Heart right ventricle (tissue), 16 donors: ENCODE measurements at regions of chr1 and their contacts with region 1.

Region 1: GRCh38 chr1:204128964-204129896 is 22.6 kb downstream of the ETNK2 start:
- DNase-seq: peak; percentile 67 to 73
- ATAC-seq: peak; percentile 79 to 93 (median 84)
- H3K4me3 ChIP-seq: peak overlapping the region in 3 of 10 donors; percentile 10 to 18 (median 17)
- H3K27ac ChIP-seq: peak overlapping the region in 2 of 10 donors; percentile 14 to 71
- H3K4me1 ChIP-seq: peaks cover 8 to 53% (median 27%) of the 10 kb centered on the region in 9 donors
- H3K27me3 ChIP-seq: no peaks in the 10 kb centered on the region
- CTCF ChIP-seq: peak; percentile 81 to 97 (median 92)

Region 2: GRCh38 chr1:203861379-203862184 is 267.6 kb before region 1 on chr1 and contains the start of gene SNRPE:
- intact Hi-C with region 1: loop called in 3 of 10 experiments (anchors 1 to 2 kb)
- DNase-seq: peak; percentile 94 to 96
- ATAC-seq: peak; percentile 98 to 99 (median 99)
- H3K4me3 ChIP-seq: peak within 1 kb of the TSS; percentile 43 to 90 (median 82)
- H3K27ac ChIP-seq: peak within 1 kb of the TSS in 9 of 10 donors; percentile 49 to 85 (median 70)
- H3K4me1 ChIP-seq: peaks cover 8 to 27% (median 16%) of the 10 kb centered on the region in 9 donors
- H3K27me3 ChIP-seq: no peaks in the 10 kb centered on the region
- CTCF ChIP-seq: peak; percentile 83 to 98 (median 97)
- total RNA-seq, gene SNRPE: 41.6 to 70.6 (median 50.4) TPM

Region 3: GRCh38 chr1:203871107-203871875 is 257.9 kb before region 1 on chr1:
- intact Hi-C with region 1: loop called in 9 of 10 experiments (anchors 1 to 5 kb)
- DNase-seq: peak in 1 of 2 donors; percentile 63
- ATAC-seq: peak; percentile 56 to 93 (median 89)
- H3K4me3 ChIP-seq: no peak overlapping the region
- H3K27ac ChIP-seq: peak overlapping the region in 5 of 10 donors; percentile 23 to 72 (median 41)
- H3K4me1 ChIP-seq: peaks cover 0 to 19% (median 14%) of the 10 kb centered on the region in 9 donors
- H3K27me3 ChIP-seq: no peaks in the 10 kb centered on the region
- CTCF ChIP-seq: peak; percentile 68 to 93 (median 79)

Region 4: DNA sequence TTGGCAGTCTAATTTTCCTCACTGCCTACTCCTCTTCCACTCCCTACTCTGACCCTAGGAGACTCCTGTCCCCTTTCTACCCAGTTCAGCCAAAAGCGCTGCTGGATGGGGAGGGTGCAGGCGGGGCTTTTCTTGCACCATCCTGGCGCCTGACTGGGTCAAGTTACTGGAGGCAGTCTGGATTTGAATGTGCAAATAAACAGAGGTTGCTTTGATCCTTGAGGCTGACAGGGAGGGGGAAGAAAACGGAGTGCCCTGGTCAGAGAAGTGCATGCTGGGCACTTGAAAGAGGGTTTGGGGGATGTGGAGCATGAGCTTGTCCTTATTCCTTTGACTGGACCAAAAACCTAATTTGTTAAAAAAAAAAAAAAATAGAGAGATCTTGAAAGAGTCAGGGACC is 133.1 kb before region 1 on chr1:
- intact Hi-C with region 1: loop called in 1 of 10 experiments (anchors 5 kb)
- DNase-seq: no peak
- ATAC-seq: peak in 5 of 8 donors; percentile 18 to 62 (median 21)
- H3K4me3 ChIP-seq: no peak overlapping the region
- H3K27ac ChIP-seq: peak overlapping the region in 3 of 10 donors; percentile 56 to 63 (median 62)
- H3K4me1 ChIP-seq: peaks cover 0 to 34% (median 12%) of the 10 kb centered on the region in 9 donors
- H3K27me3 ChIP-seq: peaks cover 0 to 3% (median 0%) of the 10 kb centered on the region in 7 donors
- CTCF ChIP-seq: no peak

Region 5: DNA sequence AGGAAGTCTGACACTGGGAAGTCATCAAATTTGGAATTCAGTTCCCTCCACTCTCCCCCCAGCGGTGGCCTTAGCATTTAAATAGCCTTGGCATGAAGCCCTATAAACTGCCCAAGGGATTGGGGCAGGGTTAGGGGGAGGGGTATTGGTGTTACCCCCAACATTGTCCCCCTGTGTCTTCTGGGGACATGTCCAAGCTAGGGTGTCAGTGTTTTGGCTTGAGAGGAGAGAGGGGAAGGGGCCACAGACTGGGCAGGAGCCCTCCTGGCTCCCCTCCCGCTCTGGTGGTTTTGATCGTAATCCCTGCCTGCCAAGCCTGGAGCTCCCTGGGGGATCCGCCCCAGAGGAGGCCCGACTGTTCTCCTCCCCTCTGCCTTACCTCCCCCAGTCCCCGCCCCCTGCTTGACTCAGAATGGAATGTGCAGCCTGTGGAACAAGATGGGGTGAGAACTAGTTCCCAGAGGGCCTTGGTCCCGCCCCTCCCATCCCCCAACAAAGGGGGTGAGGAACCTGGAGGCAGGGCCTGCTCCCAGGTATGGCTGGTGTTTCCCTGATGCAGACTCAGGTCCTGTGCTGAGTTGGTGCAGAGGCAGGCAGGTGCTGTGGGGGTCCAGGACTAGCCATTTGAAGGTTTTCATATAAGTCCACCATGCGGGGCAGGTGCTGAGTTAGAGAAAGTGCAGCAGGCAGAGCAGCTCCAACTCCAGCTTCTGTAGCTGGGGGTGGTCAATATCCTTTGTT is 48.9 kb before region 1 on chr1:
- intact Hi-C with region 1: loop called in 8 of 10 experiments (anchors 2 to 10 kb)
- DNase-seq: peak; percentile 63 to 71
- ATAC-seq: peak in 7 of 8 donors; percentile 68 to 80 (median 78)
- H3K4me3 ChIP-seq: peak overlapping the region in 3 of 10 donors; percentile 12 to 17 (median 13)
- H3K27ac ChIP-seq: peak overlapping the region in 8 of 10 donors; percentile 36 to 74 (median 50)
- H3K4me1 ChIP-seq: peaks cover 15 to 99% (median 70%) of the 10 kb centered on the region in 9 donors
- H3K27me3 ChIP-seq: peaks cover 0 to 13% (median 0%) of the 10 kb centered on the region in 7 donors
- CTCF ChIP-seq: peak in 1 of 9 donors; percentile 12

Region 6: GRCh38 chr1:204782118-204782700 is 653.0 kb after region 1 on chr1:
- intact Hi-C with region 1: no loop called
- DNase-seq: no peak
- ATAC-seq: no peak
- H3K4me3 ChIP-seq: no peak overlapping the region
- H3K27ac ChIP-seq: no peak overlapping the region
- H3K4me1 ChIP-seq: no peaks in the 10 kb centered on the region
- H3K27me3 ChIP-seq: peaks cover 0 to 70% (median 23%) of the 10 kb centered on the region in 7 donors
- CTCF ChIP-seq: no peak